Activated CD4-positive, alpha-beta T cell treated with anti-CD3 and anti-CD28 coated beads, Interleukin-2, amount 10 ng/mL, durations not matched to agents 7 days and 5 days (primary cell): ENCODE measurements at regions of chr12 and their contacts with region 1.

Region 1: GRCh38 chr12:57765042-57765697 is 1.7 kb downstream of the CYP27B1 start:
- DNase-seq: peak; percentile 49
- H3K4me3 Mint-ChIP-seq: peak overlapping the region; percentile 77
- H3K27ac Mint-ChIP-seq: no peak overlapping the region
- H3K4me1 Mint-ChIP-seq: peaks cover 33% of the 10 kb centered on the region
- H3K27me3 Mint-ChIP-seq: peaks cover 17% of the 10 kb centered on the region

Region 2: DNA sequence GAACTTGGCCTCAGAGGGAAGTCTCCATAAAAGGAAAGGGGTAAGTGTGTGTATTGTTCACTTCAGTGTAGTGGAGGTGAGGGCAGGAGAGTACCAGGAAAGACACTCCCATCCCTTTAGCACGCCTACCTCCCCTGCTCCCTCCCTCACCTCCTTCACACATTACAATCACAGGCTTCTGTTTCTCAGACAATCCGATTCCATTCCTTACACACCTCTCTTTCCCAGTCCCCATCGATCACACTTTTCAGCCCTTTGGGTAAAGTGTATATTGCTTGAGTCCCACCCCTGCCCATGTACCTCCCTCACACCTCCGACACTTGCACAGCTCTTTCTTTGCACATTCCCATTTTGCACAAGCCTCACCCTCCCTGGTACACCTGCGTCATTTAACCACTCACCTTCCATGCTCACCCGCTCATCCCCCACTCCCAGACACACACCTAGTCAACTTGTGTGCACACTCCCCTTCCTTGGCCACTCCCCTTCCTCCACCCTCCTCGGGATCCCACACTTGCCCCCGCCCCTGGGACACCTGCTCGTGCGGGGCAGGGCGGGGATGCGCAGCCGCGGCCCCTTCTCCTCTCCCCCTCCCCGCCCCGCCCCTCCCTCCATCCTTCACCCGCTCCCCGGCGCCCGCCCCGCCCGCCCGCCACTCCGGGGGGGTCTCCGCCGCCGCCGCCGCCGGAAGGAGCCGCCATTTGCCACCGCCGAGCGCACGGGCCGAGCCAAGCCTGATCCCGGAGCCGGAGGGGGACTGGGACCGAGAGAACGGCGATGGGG is 10.6 kb before region 1 on chr12 and contains the start of gene MARCHF9:
- CTCF ChIA-PET with region 1: interaction called, 56 read pairs
- POLR2A ChIA-PET with region 1: no interaction called
- DNase-seq: peak; percentile 91
- H3K4me3 Mint-ChIP-seq: peak within 1 kb of the TSS; percentile 78
- H3K27ac Mint-ChIP-seq: peak within 1 kb of the TSS; percentile 77
- H3K4me1 Mint-ChIP-seq: peaks cover 60% of the 10 kb centered on the region
- H3K27me3 Mint-ChIP-seq: no peaks in the 10 kb centered on the region
- total RNA-seq, gene MARCHF9: 23.7 to 27.2 TPM

Region 3: DNA sequence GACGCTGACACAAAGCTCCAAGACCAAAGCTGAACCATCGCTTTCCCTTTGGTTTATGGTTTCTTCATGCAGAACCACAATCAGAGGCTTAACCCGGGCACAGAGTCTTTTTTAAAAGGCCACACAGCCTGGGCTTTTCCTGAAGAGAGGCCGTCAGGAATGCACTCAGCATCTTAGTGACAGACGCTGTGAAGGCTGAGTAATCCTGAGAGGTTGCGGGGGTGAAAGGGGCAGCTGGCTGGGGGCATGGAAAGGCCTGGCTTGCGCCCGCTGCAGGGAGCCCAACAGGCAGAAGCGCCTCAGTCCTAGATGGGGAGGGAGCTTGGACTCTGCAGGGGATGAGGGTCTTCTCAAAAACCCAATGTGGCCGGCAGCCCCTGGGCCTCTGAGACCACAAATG is 67.8 kb after region 1 on chr12:
- CTCF ChIA-PET with region 1: no interaction called
- POLR2A ChIA-PET with region 1: no interaction called
- DNase-seq: no peak
- H3K4me3 Mint-ChIP-seq: no peak overlapping the region
- H3K27ac Mint-ChIP-seq: peak overlapping the region; percentile 60
- H3K4me1 Mint-ChIP-seq: peaks cover 68% of the 10 kb centered on the region
- H3K27me3 Mint-ChIP-seq: no peaks in the 10 kb centered on the region